Left cardiac atrium (tissue), 4 donors: ENCODE measurements at regions of chrX and their contacts with region 1.

Region 1: GRCh38 chrX:49043220-49043986 is at the start of gene TFE3:
- DNase-seq: peak; percentile 98
- ATAC-seq: peak; percentile 93
- total RNA-seq, gene TFE3: 34.5 to 36.2 TPM

Region 2: GRCh38 chrX:48897621-48898306 is 145.6 kb before region 1 on chrX and contains the starts of genes PQBP1 and TIMM17B:
- intact Hi-C with region 1: loop called in 1 of 2 experiments (anchors 5 kb)
- DNase-seq: peak; percentile 91
- ATAC-seq: peak; percentile 97
- total RNA-seq, gene PQBP1: 49.5 to 63.7 TPM
- total RNA-seq, gene TIMM17B: 52.4 to 60.3 TPM

Region 3: GRCh38 chrX:48972220-48973167 is 70.9 kb before region 1 on chrX:
- intact Hi-C with region 1: loop called in 1 of 2 experiments (anchors 5 kb)
- DNase-seq: peak; percentile 42
- ATAC-seq: peak; percentile 36 to 65